Naive thymus-derived CD4-positive, alpha-beta T cell (primary cell): ENCODE measurements at regions of chr11 and their contacts with region 1.

Region 1: DNA sequence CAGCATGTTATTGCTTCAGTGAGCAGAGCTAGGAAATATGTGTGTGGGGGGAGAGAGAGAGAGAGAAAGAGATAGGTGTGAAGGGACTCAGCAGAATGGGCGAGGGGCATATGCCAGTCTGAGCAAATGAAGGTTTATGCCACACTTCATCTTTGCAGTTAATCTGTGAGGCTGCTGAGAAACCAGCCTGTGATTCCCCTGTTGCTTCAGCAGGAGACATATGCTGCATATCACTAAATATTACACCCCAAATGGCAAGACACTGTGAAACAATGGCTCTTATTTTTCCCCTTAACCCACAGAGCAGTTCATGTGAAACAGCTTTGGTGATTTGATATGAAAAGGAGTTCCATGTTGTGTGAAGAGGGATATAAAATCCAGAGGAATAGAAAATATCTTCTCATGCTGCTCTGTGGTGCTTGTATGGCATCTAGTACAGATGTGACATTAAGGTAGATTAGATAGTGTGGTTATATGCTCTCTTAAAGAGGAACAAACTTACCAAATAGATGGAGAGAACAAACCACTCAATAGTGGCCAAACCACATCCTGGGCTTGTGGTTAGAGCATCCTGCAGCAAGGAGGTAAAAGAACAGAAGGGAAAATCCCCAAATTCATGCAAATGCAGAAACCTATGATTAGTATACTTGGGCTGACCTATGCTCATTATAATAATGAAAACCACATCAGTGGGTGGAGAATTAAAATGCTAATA is 864.2 kb downstream of the FAM181B start:
- DNase-seq: peak in 8 of 9 donors; percentile 84 to 94 (median 92)
- ATAC-seq: peak; percentile 94
- H3K4me3 ChIP-seq: peak overlapping the region; percentile 48
- H3K4me3 Mint-ChIP-seq: peak overlapping the region; percentile 66 to 94 (median 78)
- H3K27ac ChIP-seq: peak overlapping the region; percentile 1
- H3K27ac Mint-ChIP-seq: peak overlapping the region; percentile 9 to 96 (median 92)
- H3K4me1 ChIP-seq: peaks cover 27 to 32% of the 10 kb centered on the region in 2 donors
- H3K4me1 Mint-ChIP-seq: peaks cover 35 to 70% (median 57%) of the 10 kb centered on the region in 7 donors
- H3K27me3 ChIP-seq: no peaks in the 10 kb centered on the region
- H3K27me3 Mint-ChIP-seq: peaks cover 0 to 24% (median 0%) of the 10 kb centered on the region in 5 donors

Region 2: DNA sequence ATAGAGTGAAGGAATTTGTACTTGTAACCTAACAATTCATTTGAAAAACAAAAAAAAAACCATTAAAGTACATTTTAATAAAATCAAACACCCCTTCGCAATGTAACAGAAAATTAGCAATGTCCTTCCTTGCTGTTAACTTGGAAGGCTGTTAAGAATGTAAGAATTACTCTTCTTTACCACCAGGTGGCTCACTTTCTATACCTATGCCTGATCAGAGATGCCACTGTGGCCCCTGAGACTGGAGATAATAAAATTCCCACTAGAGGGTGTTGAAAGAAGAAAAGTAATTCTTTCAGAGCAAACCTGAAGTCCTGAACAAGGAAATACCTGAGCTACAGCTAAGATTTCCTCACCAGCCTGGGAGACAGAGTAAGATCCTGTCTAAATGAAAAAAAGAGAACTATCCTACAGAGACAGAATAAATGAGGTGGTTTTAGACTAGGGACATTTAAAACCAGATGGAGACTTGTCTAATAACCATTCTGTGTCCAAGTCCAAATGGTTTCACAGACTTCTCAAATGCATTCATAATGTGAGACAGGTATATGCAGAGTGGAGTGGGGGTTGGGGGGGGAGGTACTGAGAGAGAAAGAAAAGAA is 225.2 kb before region 1 on chr11:
- CTCF ChIA-PET with region 1: no interaction called
- POLR2A ChIA-PET with region 1: no interaction called
- intact Hi-C with region 1: loop called in 1 of 2 experiments (anchors 5 kb)
- DNase-seq: peak in 7 of 9 donors; percentile 14 to 43 (median 34)
- ATAC-seq: peak; percentile 64
- H3K4me3 ChIP-seq: no peak overlapping the region
- H3K4me3 Mint-ChIP-seq: no peak overlapping the region
- H3K27ac ChIP-seq: no peak overlapping the region
- H3K27ac Mint-ChIP-seq: no peak overlapping the region
- H3K4me1 ChIP-seq: no peaks in the 10 kb centered on the region
- H3K4me1 Mint-ChIP-seq: peaks cover 0 to 3% (median 0%) of the 10 kb centered on the region in 7 donors
- H3K27me3 ChIP-seq: peaks cover 0 to 3% of the 10 kb centered on the region in 2 donors
- H3K27me3 Mint-ChIP-seq: peaks cover 13 to 39% (median 21%) of the 10 kb centered on the region in 5 donors

Region 3: GRCh38 chr11:81822201-81822600 is 47.3 kb before region 1 on chr11:
- CTCF ChIA-PET with region 1: no interaction called
- POLR2A ChIA-PET with region 1: no interaction called
- intact Hi-C with region 1: loop called in 1 of 2 experiments (anchors 5 kb)
- DNase-seq: no peak
- ATAC-seq: no peak
- H3K4me3 ChIP-seq: no peak overlapping the region
- H3K4me3 Mint-ChIP-seq: no peak overlapping the region
- H3K27ac ChIP-seq: no peak overlapping the region
- H3K27ac Mint-ChIP-seq: peak overlapping the region in 1 of 9 donors; percentile 15
- H3K4me1 ChIP-seq: no peaks in the 10 kb centered on the region
- H3K4me1 Mint-ChIP-seq: peaks cover 0 to 14% (median 7%) of the 10 kb centered on the region in 7 donors
- H3K27me3 ChIP-seq: no peaks in the 10 kb centered on the region
- H3K27me3 Mint-ChIP-seq: peaks cover 0 to 4% (median 0%) of the 10 kb centered on the region in 5 donors

Region 4: GRCh38 chr11:81913793-81914192 is 44.3 kb after region 1 on chr11:
- CTCF ChIA-PET with region 1: interaction called, 3 read pairs
- POLR2A ChIA-PET with region 1: no interaction called
- intact Hi-C with region 1: loop called in 1 of 2 experiments (anchors 5 kb)
- DNase-seq: no peak
- ATAC-seq: no peak
- H3K4me3 ChIP-seq: no peak overlapping the region
- H3K4me3 Mint-ChIP-seq: no peak overlapping the region
- H3K27ac ChIP-seq: no peak overlapping the region
- H3K27ac Mint-ChIP-seq: no peak overlapping the region
- H3K4me1 ChIP-seq: no peaks in the 10 kb centered on the region
- H3K4me1 Mint-ChIP-seq: peaks cover 0 to 10% (median 0%) of the 10 kb centered on the region in 7 donors
- H3K27me3 ChIP-seq: no peaks in the 10 kb centered on the region
- H3K27me3 Mint-ChIP-seq: no peaks in the 10 kb centered on the region

Region 5: GRCh38 chr11:82038153-82038552 is 168.6 kb after region 1 on chr11:
- CTCF ChIA-PET with region 1: no interaction called
- POLR2A ChIA-PET with region 1: no interaction called
- intact Hi-C with region 1: loop called in 1 of 2 experiments (anchors 5 kb)
- DNase-seq: no peak
- ATAC-seq: no peak
- H3K4me3 ChIP-seq: no peak overlapping the region
- H3K4me3 Mint-ChIP-seq: no peak overlapping the region
- H3K27ac ChIP-seq: no peak overlapping the region
- H3K27ac Mint-ChIP-seq: no peak overlapping the region
- H3K4me1 ChIP-seq: no peaks in the 10 kb centered on the region
- H3K4me1 Mint-ChIP-seq: no peaks in the 10 kb centered on the region
- H3K27me3 ChIP-seq: no peaks in the 10 kb centered on the region
- H3K27me3 Mint-ChIP-seq: no peaks in the 10 kb centered on the region

Region 6: DNA sequence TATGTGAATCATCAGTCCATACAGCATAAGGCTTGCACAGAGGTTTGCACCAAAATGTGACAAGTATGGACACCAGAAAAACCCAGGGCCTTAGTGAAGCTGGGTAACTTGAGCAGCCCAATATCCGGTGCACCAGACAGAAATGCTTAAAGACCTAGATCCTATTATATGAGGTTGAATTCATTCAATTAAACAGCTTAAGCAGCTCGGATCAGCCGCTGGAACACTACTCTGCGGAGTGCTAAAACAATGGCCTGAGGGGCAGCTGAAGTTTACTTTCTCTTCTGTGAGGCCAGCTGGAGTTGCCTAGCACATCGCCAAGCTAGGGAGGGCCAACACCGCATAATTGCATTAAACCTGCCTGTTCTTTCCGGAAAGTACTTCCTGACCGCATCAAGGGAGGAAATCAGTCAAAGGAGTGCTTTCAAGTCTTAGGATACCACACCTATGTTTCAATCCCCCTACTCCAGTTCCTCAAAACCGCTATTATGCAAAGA is 881.2 kb after region 1 on chr11:
- CTCF ChIA-PET with region 1: no interaction called
- POLR2A ChIA-PET with region 1: no interaction called
- intact Hi-C with region 1: loop called in 1 of 2 experiments (anchors 10 kb)
- DNase-seq: peak in 7 of 9 donors; percentile 41 to 66 (median 62)
- ATAC-seq: peak; percentile 84
- H3K4me3 ChIP-seq: peak overlapping the region; percentile 21
- H3K4me3 Mint-ChIP-seq: peak overlapping the region; percentile 71 to 87 (median 82)
- H3K27ac ChIP-seq: peak overlapping the region; percentile 11
- H3K27ac Mint-ChIP-seq: peak overlapping the region; percentile 22 to 91 (median 60)
- H3K4me1 ChIP-seq: peaks cover 2 to 27% of the 10 kb centered on the region in 2 donors
- H3K4me1 Mint-ChIP-seq: peaks cover 15 to 47% (median 38%) of the 10 kb centered on the region in 7 donors
- H3K27me3 ChIP-seq: no peaks in the 10 kb centered on the region
- H3K27me3 Mint-ChIP-seq: peaks cover 0 to 38% (median 0%) of the 10 kb centered on the region in 5 donors